ENCODE measurements at regions of chr16 and their contacts with region 1.

Region 1: DNA sequence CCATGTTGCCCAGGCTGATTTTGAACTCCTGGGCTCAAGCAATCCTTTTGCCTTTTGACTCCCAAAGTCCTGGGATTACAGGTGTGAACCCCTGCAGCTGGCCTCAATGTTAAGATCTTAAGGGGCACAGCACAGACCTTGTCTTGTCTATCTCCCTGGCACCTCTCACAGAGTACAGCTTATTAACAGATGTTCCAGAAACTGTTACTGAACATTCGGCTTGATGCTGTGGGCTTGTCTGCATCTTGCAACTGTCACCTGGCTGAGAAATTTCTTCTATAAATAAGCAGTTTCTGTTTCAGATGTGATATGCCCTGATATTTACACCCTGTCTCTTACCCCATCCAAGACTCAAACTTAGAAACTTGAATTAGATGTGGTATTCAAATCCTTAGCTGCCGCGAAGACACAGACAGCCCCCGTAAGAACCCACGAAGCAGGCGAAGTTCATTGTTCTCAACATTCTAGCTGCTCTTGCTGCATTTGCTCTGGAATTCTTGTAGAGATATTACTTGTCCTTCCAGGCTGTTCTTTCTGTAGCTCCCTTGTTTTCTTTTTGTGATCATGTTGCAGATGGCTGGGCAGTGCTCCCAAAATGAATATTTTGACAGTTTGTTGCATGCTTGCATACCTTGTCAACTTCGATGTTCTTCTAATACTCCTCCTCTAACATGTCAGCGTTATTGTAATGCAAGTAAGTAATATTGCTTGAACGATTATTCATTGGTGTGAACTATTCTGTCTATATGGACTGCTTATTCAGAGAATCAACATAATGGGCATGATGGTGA is at the start of gene TNFRSF17:
- DNase-seq: peak; percentile 58
- ATAC-seq: peak; percentile 69
- H3K4me3 ChIP-seq: peak within 1 kb of the TSS in 4 of 5 experiments; percentile 25 to 65 (median 51)
- H3K4me3 Mint-ChIP-seq: peak within 1 kb of the TSS; percentile 87
- H3K27ac ChIP-seq: peak within 1 kb of the TSS; percentile 85 to 86
- H3K27ac Mint-ChIP-seq: peak within 1 kb of the TSS; percentile 97
- H3K4me1 ChIP-seq: peaks cover 51 to 83% of the 10 kb centered on the region in 2 donors
- H3K4me1 Mint-ChIP-seq: peaks cover 60% of the 10 kb centered on the region
- H3K27me3 ChIP-seq: no peaks in the 10 kb centered on the region
- H3K27me3 Mint-ChIP-seq: no peaks in the 10 kb centered on the region
- CTCF ChIP-seq: no peak
- total RNA-seq, gene TNFRSF17: 4.6 and 6.3 TPM in 2 replicates

Region 2: GRCh38 chr16:11949527-11949926 is 15.4 kb before region 1 on chr16:
- CTCF ChIA-PET with region 1: interaction called, 23 read pairs
- POLR2A ChIA-PET with region 1: interaction called, 7 read pairs
- intact Hi-C with region 1: loop called (anchors 1 kb)
- DNase-seq: peak; percentile 78
- ATAC-seq: peak; percentile 91
- H3K4me3 ChIP-seq: no peak overlapping the region
- H3K4me3 Mint-ChIP-seq: no peak overlapping the region
- H3K27ac ChIP-seq: no peak overlapping the region
- H3K27ac Mint-ChIP-seq: peak overlapping the region; percentile 64
- H3K4me1 ChIP-seq: peaks cover 13 to 14% of the 10 kb centered on the region in 2 donors
- H3K4me1 Mint-ChIP-seq: peaks cover 9% of the 10 kb centered on the region
- H3K27me3 ChIP-seq: no peaks in the 10 kb centered on the region
- H3K27me3 Mint-ChIP-seq: no peaks in the 10 kb centered on the region
- CTCF ChIP-seq: peak; percentile 87

Region 3: GRCh38 chr16:12026741-12027490 is 62.0 kb after region 1 on chr16:
- CTCF ChIA-PET with region 1: interaction called, 4 read pairs
- POLR2A ChIA-PET with region 1: interaction called, 9 read pairs
- intact Hi-C with region 1: loop called (anchors 2 kb)
- DNase-seq: peak; percentile 33
- ATAC-seq: peak; percentile 39
- H3K4me3 ChIP-seq: no peak overlapping the region
- H3K4me3 Mint-ChIP-seq: no peak overlapping the region
- H3K27ac ChIP-seq: peak overlapping the region; percentile 16 to 59
- H3K27ac Mint-ChIP-seq: peak overlapping the region; percentile 70
- H3K4me1 ChIP-seq: peaks cover 44 to 58% of the 10 kb centered on the region in 2 donors
- H3K4me1 Mint-ChIP-seq: peaks cover 64% of the 10 kb centered on the region
- H3K27me3 ChIP-seq: no peaks in the 10 kb centered on the region
- H3K27me3 Mint-ChIP-seq: no peaks in the 10 kb centered on the region
- CTCF ChIP-seq: no peak

Region 4: GRCh38 chr16:12276556-12276955 is 311.6 kb after region 1 on chr16:
- CTCF ChIA-PET with region 1: no interaction called
- POLR2A ChIA-PET with region 1: no interaction called
- intact Hi-C with region 1: no loop called
- DNase-seq: no peak
- ATAC-seq: no peak
- H3K4me3 ChIP-seq: no peak overlapping the region
- H3K4me3 Mint-ChIP-seq: no peak overlapping the region
- H3K27ac ChIP-seq: no peak overlapping the region
- H3K27ac Mint-ChIP-seq: peak overlapping the region; percentile 38
- H3K4me1 ChIP-seq: no peaks in the 10 kb centered on the region
- H3K4me1 Mint-ChIP-seq: no peaks in the 10 kb centered on the region
- H3K27me3 ChIP-seq: no peaks in the 10 kb centered on the region
- H3K27me3 Mint-ChIP-seq: no peaks in the 10 kb centered on the region
- CTCF ChIP-seq: no peak

Region 5: GRCh38 chr16:12535535-12536411 is 570.8 kb after region 1 on chr16:
- CTCF ChIA-PET with region 1: no interaction called
- POLR2A ChIA-PET with region 1: interaction called, 10 read pairs
- intact Hi-C with region 1: no loop called
- DNase-seq: no peak
- ATAC-seq: peak; percentile 41
- H3K4me3 ChIP-seq: no peak overlapping the region
- H3K4me3 Mint-ChIP-seq: no peak overlapping the region
- H3K27ac ChIP-seq: no peak overlapping the region
- H3K27ac Mint-ChIP-seq: no peak overlapping the region
- H3K4me1 ChIP-seq: peaks cover 14 to 46% of the 10 kb centered on the region in 2 donors
- H3K4me1 Mint-ChIP-seq: peaks cover 72% of the 10 kb centered on the region
- H3K27me3 ChIP-seq: no peaks in the 10 kb centered on the region
- H3K27me3 Mint-ChIP-seq: no peaks in the 10 kb centered on the region
- CTCF ChIP-seq: no peak

Measured in B cell (primary cell).